Activated CD4-positive, alpha-beta T cell treated with anti-CD3 and anti-CD28 coated beads for 36 hours (primary cell): ENCODE measurements at regions of chr7 and their contacts with region 1.

Region 1: DNA sequence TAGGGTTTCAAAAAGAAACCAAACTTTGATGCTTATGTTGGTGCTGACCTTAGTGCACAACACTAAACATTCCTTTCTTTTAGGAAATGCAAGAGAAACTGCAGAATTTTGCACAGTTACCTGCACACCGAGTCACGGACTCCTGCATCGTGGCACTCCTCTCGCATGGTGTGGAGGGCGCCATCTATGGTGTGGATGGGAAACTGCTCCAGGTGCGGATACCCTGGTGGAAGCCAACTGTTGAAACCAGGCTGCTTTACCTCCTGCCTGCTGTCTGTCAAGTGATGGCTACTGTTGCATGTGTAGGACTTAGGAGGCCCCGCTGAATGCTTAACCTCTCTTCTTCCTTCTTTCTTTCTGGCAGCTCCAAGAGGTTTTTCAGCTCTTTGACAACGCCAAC is 11.7 kb downstream of the CASP2 start:
- DNase-seq: peak; percentile 76
- ATAC-seq: peak; percentile 95
- H3K4me3 Mint-ChIP-seq: no peak overlapping the region
- H3K27ac Mint-ChIP-seq: no peak overlapping the region
- H3K4me1 Mint-ChIP-seq: peaks cover 34% of the 10 kb centered on the region
- H3K27me3 Mint-ChIP-seq: no peaks in the 10 kb centered on the region

Region 2: DNA sequence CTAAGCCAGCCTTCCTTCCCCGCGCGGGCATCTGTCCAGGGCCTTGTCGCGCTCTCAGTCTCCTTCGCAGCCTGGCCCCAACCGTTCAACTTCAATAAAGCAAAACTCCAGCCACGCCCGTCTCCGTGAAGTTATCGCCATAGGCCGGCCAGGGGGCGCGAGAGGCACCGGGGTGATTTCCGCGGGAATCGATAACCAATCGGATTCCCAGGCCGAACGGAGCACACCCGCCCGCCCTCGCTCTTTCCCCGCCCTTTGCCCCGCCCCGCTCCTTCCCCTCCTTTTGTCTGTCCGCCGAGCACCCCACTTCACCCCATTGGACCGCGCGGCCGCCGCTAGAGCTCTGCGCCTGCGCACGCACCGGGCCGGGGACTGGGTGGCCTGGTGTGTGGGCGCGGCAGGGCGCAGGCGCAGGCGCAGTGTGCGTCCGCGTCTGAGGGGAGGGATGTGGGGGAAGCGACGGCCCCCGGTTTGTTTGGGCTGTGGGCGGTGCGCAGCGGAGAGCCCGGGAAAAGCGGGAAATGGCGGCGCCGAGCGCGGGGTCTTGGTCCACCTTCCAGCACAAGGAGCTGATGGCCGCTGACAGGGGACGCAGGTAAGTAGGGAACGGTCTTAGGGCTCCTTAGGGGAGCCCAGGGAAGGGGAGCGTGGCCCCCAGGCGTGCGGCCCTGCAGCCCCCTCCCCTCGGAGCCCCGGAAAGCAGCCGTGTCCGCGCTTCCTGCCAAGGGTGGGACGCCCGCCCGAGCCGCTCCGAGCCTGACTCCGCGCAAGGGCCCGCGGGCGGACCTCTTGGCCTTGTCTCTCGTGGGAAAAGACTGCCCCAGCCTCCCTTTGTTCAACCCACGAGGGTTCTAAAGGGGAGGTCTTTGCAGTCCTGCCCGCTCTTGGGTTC is 11.7 kb before region 1 on chr7 and contains the start of gene CASP2:
- CTCF ChIA-PET with region 1: interaction called, 25 read pairs
- POLR2A ChIA-PET with region 1: interaction called, 4 read pairs
- intact Hi-C with region 1: no loop called
- DNase-seq: peak; percentile 100
- ATAC-seq: peak; percentile 94
- H3K4me3 Mint-ChIP-seq: peak within 1 kb of the TSS; percentile 89
- H3K27ac Mint-ChIP-seq: peak within 1 kb of the TSS; percentile 98
- H3K4me1 Mint-ChIP-seq: peaks cover 46% of the 10 kb centered on the region
- H3K27me3 Mint-ChIP-seq: no peaks in the 10 kb centered on the region
- total RNA-seq, gene CASP2: 91.1 to 106 TPM

Region 3: DNA sequence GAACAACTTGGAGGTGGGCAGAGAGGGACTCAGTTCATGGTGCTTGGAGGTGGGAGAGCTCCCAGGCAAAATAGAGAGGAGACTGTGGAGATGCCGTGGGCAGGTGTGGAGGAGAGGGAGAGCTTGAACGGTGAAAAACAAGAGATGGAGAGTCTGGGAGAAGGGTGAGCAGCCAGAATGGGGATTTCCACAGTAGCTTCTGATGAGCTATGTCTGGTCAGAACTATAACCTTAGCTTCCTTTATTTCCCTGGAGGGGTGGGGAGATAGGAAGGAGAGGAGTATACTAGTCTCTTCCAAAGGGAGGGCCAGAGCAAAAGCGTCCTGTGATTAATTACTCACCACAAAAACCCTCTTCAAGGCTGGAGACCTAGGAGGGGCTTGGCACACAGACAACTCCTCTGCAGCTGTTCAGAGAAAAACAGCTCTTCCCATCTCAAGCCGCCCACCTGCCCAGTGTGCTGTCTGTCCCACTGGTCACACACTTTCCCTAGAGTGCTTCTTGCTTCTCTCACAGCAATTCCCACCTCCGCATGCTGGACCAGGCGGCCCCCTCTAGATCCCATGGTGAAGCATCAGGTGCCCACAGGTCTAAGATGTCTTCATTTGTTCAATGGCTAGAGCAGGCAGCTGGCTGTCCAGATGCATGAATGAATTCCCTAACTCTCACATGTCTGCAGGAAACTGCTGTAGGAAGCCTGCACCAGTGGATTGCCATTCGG is 219.7 kb after region 1 on chr7:
- CTCF ChIA-PET with region 1: no interaction called
- POLR2A ChIA-PET with region 1: no interaction called
- intact Hi-C with region 1: no loop called
- DNase-seq: no peak
- ATAC-seq: no peak
- H3K4me3 Mint-ChIP-seq: no peak overlapping the region
- H3K27ac Mint-ChIP-seq: no peak overlapping the region
- H3K4me1 Mint-ChIP-seq: peaks cover 9% of the 10 kb centered on the region
- H3K27me3 Mint-ChIP-seq: no peaks in the 10 kb centered on the region